PC-3 (cell line): ENCODE measurements at regions of chr7 and their contacts with region 1.

Region 1: GRCh38 chr7:146728611-146729010 is 612.0 kb downstream of the CNTNAP2 start:
- DNase-seq: no peak
- ATAC-seq: no peak
- H3K4me3 ChIP-seq: no peak overlapping the region
- H3K27ac ChIP-seq: no peak overlapping the region
- H3K4me1 ChIP-seq: peaks cover 11% of the 10 kb centered on the region
- H3K27me3 ChIP-seq: no peaks in the 10 kb centered on the region
- CTCF ChIP-seq: no peak

Region 2: GRCh38 chr7:146216396-146217041 is 512.1 kb before region 1 on chr7:
- CTCF ChIA-PET with region 1: no interaction called
- POLR2A ChIA-PET with region 1: no interaction called
- intact Hi-C with region 1: loop called (anchors 1 kb)
- DNase-seq: peak; percentile 53
- ATAC-seq: peak; percentile 84
- H3K4me3 ChIP-seq: peak overlapping the region; percentile 48
- H3K27ac ChIP-seq: peak overlapping the region; percentile 53
- H3K4me1 ChIP-seq: peaks cover 13% of the 10 kb centered on the region; the same call in 1 of the 2 replicates
- H3K27me3 ChIP-seq: no peaks in the 10 kb centered on the region
- CTCF ChIP-seq: no peak

Region 3: DNA sequence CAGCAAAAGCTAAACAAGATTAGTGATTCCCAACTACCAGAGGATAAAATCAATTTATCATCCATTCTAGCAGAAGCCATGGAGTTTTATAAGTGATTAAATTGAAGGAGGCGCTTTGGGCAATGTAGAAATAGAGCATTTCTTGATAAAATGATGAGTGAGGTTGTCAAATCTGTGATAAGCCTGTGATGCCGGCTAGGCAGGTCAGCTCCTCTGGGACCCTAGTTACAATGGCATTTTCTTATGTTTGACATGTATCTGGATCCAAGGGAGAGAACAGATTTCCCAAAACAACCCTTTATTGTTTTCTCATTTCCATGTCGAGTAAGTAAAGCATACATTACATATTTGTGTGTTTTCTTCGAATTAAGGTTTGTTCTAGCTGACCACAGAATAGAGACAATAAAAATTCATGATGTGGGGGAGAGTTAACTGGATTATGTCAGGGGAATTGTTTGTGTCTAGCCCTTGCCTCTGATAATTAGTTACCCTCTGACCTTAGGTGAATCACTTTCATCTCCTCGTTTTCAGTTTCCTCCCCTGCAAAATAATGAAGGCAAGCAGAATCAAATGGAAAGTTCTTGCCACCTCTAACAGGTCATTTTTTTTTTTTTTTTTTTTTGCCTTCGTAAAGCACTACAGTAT is 233.5 kb before region 1 on chr7:
- CTCF ChIA-PET with region 1: no interaction called
- POLR2A ChIA-PET with region 1: no interaction called
- intact Hi-C with region 1: loop called (anchors 5 kb)
- DNase-seq: no peak
- ATAC-seq: no peak; the same call in 1 of the 2 replicates
- H3K4me3 ChIP-seq: no peak overlapping the region
- H3K27ac ChIP-seq: no peak overlapping the region
- H3K4me1 ChIP-seq: no peaks in the 10 kb centered on the region
- H3K27me3 ChIP-seq: no peaks in the 10 kb centered on the region
- CTCF ChIP-seq: no peak

Region 4: DNA sequence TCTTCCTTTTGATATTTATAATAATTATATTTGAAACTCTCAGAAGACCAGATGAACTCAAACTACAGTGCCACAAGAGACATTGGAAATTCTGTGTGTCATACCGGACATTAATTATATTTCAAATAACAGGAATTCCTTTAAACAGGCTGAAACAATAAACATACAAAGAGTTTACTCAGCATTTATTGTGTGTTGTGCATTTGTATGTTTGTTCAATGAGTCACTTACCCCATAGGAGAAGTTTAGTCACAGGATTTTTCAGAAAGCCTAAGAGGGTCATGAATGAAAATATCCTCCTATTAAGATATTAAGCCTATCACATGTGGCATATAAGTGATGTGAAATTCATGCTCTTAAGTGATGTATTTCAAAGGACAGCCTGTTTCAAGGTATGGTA is 45.2 kb before region 1 on chr7:
- CTCF ChIA-PET with region 1: no interaction called
- POLR2A ChIA-PET with region 1: no interaction called
- intact Hi-C with region 1: loop called (anchors 5 kb)
- DNase-seq: peak; percentile 73
- ATAC-seq: peak; percentile 94
- H3K4me3 ChIP-seq: no peak overlapping the region
- H3K27ac ChIP-seq: peak overlapping the region; percentile 77
- H3K4me1 ChIP-seq: peaks cover 12% of the 10 kb centered on the region
- H3K27me3 ChIP-seq: no peaks in the 10 kb centered on the region
- CTCF ChIP-seq: no peak

Region 5: DNA sequence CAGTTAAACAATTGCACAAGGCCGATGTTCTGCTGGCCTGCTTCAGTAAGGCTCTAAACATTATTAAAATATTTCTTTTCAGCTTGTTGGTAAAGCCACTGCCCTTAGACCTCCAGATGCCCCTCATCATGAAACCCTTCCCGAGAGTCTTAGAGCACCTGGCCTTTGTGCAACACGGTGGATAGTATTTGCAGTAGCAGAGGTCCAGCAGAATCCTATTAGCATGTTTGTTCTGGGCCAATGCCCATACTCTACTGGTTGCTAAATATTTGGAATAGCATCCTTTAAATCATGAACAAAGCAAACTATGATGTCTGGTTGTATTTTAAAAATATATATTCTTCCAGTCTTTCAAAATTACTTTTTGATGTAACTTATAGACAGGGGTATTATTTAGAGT is 27.4 kb before region 1 on chr7:
- CTCF ChIA-PET with region 1: no interaction called
- POLR2A ChIA-PET with region 1: no interaction called
- intact Hi-C with region 1: loop called (anchors 2 kb)
- DNase-seq: no peak
- ATAC-seq: peak; percentile 49
- H3K4me3 ChIP-seq: no peak overlapping the region
- H3K27ac ChIP-seq: no peak overlapping the region
- H3K4me1 ChIP-seq: no peaks in the 10 kb centered on the region
- H3K27me3 ChIP-seq: no peaks in the 10 kb centered on the region
- CTCF ChIP-seq: no peak